ENCODE measurements at regions of chr12 and their contacts with region 1.

Region 1: DNA sequence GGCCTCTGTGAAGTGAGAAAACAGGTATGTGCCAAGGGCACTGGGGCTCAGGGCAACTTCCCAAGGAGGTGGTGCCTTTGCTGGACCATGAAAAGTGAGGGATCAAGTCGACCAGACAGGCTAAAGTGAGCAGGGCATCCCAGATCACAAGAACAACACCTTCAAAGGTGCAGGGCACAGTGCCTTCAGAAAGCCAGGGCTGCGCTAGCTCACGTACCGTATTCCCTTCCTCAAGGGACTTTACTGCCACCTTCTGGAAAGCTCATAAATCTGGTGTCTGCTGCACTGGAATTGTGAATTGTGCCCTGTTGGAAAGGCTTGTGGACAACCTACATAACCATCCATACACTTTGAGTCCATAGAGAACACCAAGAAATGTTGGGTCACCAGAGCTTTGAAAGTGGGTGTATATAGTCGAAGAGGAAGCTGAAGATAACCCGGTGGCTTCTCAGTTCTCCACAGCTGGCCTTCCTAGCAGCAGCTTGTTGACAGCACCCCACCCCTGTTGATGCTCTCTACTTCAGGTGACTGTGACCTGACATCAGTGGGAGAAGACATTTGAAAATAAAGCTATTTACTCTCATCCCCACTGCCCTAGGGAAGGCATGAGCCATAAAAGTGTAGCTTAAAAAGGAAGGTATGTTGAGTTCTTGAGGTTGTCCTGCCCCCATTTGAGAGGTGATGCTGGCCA is 24.5 kb downstream of the FIGNL2 start:
- DNase-seq: peak; percentile 55
- H3K4me3 ChIP-seq: no peak overlapping the region
- H3K27ac ChIP-seq: no peak overlapping the region
- H3K4me1 ChIP-seq: peaks cover 3% of the 10 kb centered on the region
- H3K27me3 ChIP-seq: no peaks in the 10 kb centered on the region
- CTCF ChIP-seq: peak; percentile 60 to 68
- POLR2A ChIP-seq: no peak

Region 2: DNA sequence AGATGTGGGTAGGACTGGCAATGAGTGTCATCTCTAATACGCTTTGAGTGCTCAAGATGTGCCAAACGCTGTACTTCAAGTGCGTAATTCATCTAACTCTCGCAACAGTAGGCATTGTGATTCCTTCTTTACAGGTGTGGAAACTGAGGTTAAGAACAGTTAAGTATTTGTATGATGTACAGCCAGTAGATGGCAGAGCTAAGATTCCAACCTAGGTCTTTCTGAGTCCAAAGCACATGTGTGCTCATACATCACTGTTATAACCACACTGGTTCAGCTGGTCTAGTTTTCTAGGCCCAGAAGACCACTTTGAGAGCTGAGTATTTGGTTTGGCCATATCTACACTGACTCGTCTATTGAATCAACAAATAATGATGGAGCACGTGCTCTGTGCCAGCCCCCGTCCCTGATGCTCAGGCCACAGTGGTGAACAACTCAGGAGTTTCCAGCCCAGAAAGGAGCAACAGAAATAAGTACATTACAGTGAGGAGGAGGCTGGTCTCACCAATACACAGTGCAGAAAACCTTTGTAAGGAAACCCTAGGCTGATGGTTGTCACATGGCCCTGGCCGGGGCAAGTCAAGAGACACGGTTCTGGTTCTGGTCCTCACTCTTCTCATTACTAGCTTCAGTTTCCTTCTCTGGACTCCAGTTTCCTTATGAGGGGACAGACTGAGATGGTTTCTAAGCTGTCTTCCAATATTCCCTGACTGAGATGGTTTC is 302.3 kb before region 1 on chr12:
- CTCF ChIA-PET with region 1: interaction called, 26 read pairs
- POLR2A ChIA-PET with region 1: no interaction called
- dilution Hi-C with region 1: no loop called
- intact Hi-C with region 1: no loop called
- DNase-seq: peak; percentile 10
- H3K4me3 ChIP-seq: no peak overlapping the region
- H3K27ac ChIP-seq: no peak overlapping the region
- H3K4me1 ChIP-seq: no peaks in the 10 kb centered on the region
- H3K27me3 ChIP-seq: peaks cover 0 to 7% of the 10 kb centered on the region in 2 experiments
- CTCF ChIP-seq: peak in 1 of 2 donors; percentile 12
- POLR2A ChIP-seq: no peak

Region 3: DNA sequence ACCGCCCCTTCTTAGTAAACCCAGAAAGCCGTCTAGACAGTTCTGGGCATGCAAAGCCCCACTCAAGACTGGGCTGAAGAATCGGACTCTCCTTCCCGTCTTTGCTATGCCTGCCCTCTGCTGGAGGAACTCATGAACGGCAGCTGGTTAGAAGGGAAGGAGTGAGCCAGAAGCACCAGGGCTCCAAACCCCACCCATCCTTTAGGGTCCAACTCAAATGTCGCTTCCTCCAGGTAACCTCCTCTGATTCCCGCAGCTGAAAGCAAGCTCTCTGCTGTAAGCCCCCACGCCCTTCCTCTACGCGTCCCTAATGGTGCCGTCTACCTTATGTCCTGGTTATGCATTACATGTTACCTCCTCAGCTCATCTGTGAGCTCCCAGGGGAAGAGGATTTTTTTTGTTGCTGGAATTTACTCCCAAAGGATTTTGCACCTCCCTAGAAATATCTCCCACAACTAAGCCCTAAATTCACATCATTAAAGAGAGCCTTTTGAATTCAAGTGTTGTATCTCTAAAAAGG is 292.0 kb before region 1 on chr12:
- CTCF ChIA-PET with region 1: interaction called, 74 read pairs
- POLR2A ChIA-PET with region 1: no interaction called
- dilution Hi-C with region 1: no loop called
- intact Hi-C with region 1: loop called (anchors 1 kb)
- DNase-seq: peak; percentile 73
- H3K4me3 ChIP-seq: no peak overlapping the region
- H3K27ac ChIP-seq: no peak overlapping the region
- H3K4me1 ChIP-seq: no peaks in the 10 kb centered on the region
- H3K27me3 ChIP-seq: peaks cover 2 to 3% of the 10 kb centered on the region in 2 experiments
- CTCF ChIP-seq: peak; percentile 82 to 90
- POLR2A ChIP-seq: no peak

Region 4: GRCh38 chr12:51836041-51836826 is 12.2 kb after region 1 on chr12:
- CTCF ChIA-PET with region 1: interaction called, 18 read pairs
- POLR2A ChIA-PET with region 1: no interaction called
- dilution Hi-C with region 1: no loop called
- intact Hi-C with region 1: no loop called
- DNase-seq: no peak
- H3K4me3 ChIP-seq: no peak overlapping the region
- H3K27ac ChIP-seq: no peak overlapping the region
- H3K4me1 ChIP-seq: peaks cover 10% of the 10 kb centered on the region
- H3K27me3 ChIP-seq: peaks cover 3 to 18% of the 10 kb centered on the region in 2 experiments
- CTCF ChIP-seq: no peak
- POLR2A ChIP-seq: no peak

Region 5: GRCh38 chr12:51863933-51864832 is 40.2 kb after region 1 on chr12:
- CTCF ChIA-PET with region 1: interaction called, 13 read pairs
- POLR2A ChIA-PET with region 1: no interaction called
- dilution Hi-C with region 1: no loop called
- intact Hi-C with region 1: no loop called
- DNase-seq: no peak
- H3K4me3 ChIP-seq: no peak overlapping the region
- H3K27ac ChIP-seq: no peak overlapping the region
- H3K4me1 ChIP-seq: peaks cover 6% of the 10 kb centered on the region
- H3K27me3 ChIP-seq: no peaks in the 10 kb centered on the region
- CTCF ChIP-seq: no peak
- POLR2A ChIP-seq: no peak

Region 6: GRCh38 chr12:51970904-51971646 is 147.1 kb after region 1 on chr12:
- CTCF ChIA-PET with region 1: no interaction called
- POLR2A ChIA-PET with region 1: no interaction called
- dilution Hi-C with region 1: no loop called
- intact Hi-C with region 1: no loop called
- DNase-seq: peak; percentile 89
- H3K4me3 ChIP-seq: peak overlapping the region in 1 of 3 experiments; percentile 3
- H3K27ac ChIP-seq: peak overlapping the region; percentile 98
- H3K4me1 ChIP-seq: peaks cover 70% of the 10 kb centered on the region
- H3K27me3 ChIP-seq: no peaks in the 10 kb centered on the region
- CTCF ChIP-seq: peak; percentile 82 to 85
- POLR2A ChIP-seq: no peak